ENCODE measurements at regions of chr15 and their contacts with region 1.

Region 1: DNA sequence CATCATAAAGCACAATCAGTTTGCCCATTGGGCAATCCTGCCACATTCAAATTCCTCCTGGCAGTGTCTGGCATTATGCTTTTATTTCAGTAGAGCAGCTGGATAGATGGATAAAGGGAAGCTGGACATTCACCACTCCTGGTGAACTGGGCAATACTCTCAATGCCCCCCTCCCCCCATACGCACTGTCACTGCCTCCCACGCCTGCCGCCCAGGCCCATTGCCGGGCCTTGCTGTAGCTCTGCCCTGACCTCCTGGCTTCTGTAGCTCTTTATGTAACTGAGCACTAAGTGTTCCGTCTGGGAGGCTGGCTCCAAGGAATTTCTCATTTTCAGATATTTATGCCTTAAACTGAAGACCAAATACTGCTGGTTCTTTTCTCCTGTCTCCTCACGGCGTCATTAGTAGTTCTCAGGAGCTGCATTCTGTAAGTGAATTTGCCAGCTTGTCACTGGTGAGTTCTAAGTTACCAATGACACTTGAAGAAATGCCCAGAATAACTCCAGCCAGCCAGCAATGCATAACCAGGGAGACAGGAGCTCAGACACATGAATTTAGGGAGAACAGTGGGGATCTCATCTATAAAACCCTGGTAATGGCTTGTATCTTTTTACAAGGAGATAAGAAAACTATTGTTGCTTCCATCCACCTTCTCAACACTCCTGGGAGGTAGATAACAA is 25.5 kb upstream of the RASGRF1 start:
- DNase-seq: no peak
- H3K4me3 ChIP-seq: no peak overlapping the region
- H3K27ac ChIP-seq: no peak overlapping the region
- H3K4me1 ChIP-seq: no peaks in the 10 kb centered on the region
- H3K27me3 ChIP-seq: no peaks in the 10 kb centered on the region
- CTCF ChIP-seq: no peak
- EP300 ChIP-seq: no peak
- RAD21 ChIP-seq: no peak

Region 2: GRCh38 chr15:78850941-78851755 is 265.0 kb before region 1 on chr15:
- CTCF ChIA-PET with region 1: no interaction called
- POLR2A ChIA-PET with region 1: no interaction called
- DNase-seq: no peak
- H3K4me3 ChIP-seq: no peak overlapping the region
- H3K27ac ChIP-seq: no peak overlapping the region
- H3K4me1 ChIP-seq: no peaks in the 10 kb centered on the region; a peak in 1 of 4 replicates
- H3K27me3 ChIP-seq: no peaks in the 10 kb centered on the region
- CTCF ChIP-seq: no peak
- EP300 ChIP-seq: no peak
- RAD21 ChIP-seq: no peak

Region 3: DNA sequence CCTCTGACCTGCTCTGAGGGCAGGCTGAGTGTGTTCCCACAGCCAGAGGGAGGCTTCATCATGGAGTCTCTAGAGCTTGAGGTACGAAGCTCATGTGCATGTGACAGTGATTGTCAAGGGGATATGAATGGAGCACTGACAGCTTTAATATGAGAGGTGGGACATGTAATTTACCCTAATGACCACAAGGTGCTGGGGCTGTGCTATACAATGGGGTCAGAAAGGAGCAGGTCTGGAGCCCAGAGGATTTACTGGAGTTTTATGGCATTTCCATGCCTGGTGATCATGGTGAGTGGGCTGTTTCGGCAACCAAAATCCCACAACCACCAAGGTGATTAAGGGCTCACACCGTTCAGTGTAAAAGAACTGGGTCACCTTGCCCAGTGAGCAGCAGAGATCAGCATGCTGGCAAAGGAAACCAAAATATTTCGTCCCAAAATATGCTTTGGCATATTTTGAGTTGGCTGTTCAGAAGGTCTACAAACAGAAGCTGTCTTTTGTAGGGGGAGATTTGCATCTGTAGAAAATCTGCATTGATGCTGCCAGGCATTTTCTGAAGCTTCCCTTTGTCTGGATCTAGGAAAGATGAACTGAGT is 14.5 kb after region 1 on chr15:
- CTCF ChIA-PET with region 1: interaction called, 11 read pairs
- POLR2A ChIA-PET with region 1: no interaction called
- DNase-seq: no peak
- H3K4me3 ChIP-seq: no peak overlapping the region
- H3K27ac ChIP-seq: no peak overlapping the region
- H3K4me1 ChIP-seq: no peaks in the 10 kb centered on the region
- H3K27me3 ChIP-seq: no peaks in the 10 kb centered on the region
- CTCF ChIP-seq: no peak; the same call in 1 of the 2 replicates
- EP300 ChIP-seq: no peak
- RAD21 ChIP-seq: 0 out of 2 replicates have a peak, but pooled peaks have one; percentile 13

Region 4: GRCh38 chr15:79728867-79729266 is 612.7 kb after region 1 on chr15:
- CTCF ChIA-PET with region 1: no interaction called
- POLR2A ChIA-PET with region 1: no interaction called
- DNase-seq: no peak
- H3K4me3 ChIP-seq: no peak overlapping the region
- H3K27ac ChIP-seq: no peak overlapping the region
- H3K4me1 ChIP-seq: no peaks in the 10 kb centered on the region
- H3K27me3 ChIP-seq: no peaks in the 10 kb centered on the region
- CTCF ChIP-seq: no peak
- EP300 ChIP-seq: no peak
- RAD21 ChIP-seq: no peak

Measured in SK-N-SH (cell line).